ENCODE measurements at regions of chr1 and their contacts with region 1.

Region 1: GRCh38 chr1:234722904-234723720 is 113.1 kb upstream of the IRF2BP2 start:
- DNase-seq: peak; percentile 67
- H3K4me3 ChIP-seq: peak overlapping the region; percentile 41
- H3K27ac ChIP-seq: peak overlapping the region; percentile 99
- H3K4me1 ChIP-seq: peaks cover 96% of the 10 kb centered on the region
- H3K27me3 ChIP-seq: no peaks in the 10 kb centered on the region
- CTCF ChIP-seq: no peak

Region 2: GRCh38 chr1:234610348-234611152 is 112.6 kb before region 1 on chr1:
- intact Hi-C with region 1: loop called (anchors 2 kb)
- DNase-seq: peak; percentile 96
- H3K4me3 ChIP-seq: peak overlapping the region; percentile 74
- H3K27ac ChIP-seq: peak overlapping the region; percentile 100
- H3K4me1 ChIP-seq: peaks cover 74% of the 10 kb centered on the region
- H3K27me3 ChIP-seq: no peaks in the 10 kb centered on the region
- CTCF ChIP-seq: no peak

Region 3: GRCh38 chr1:234656856-234657654 is 66.1 kb before region 1 on chr1:
- intact Hi-C with region 1: no loop called
- DNase-seq: no peak
- H3K4me3 ChIP-seq: no peak overlapping the region
- H3K27ac ChIP-seq: peak overlapping the region; percentile 12
- H3K4me1 ChIP-seq: peaks cover 14% of the 10 kb centered on the region
- H3K27me3 ChIP-seq: no peaks in the 10 kb centered on the region
- CTCF ChIP-seq: no peak

Region 4: GRCh38 chr1:234842726-234843641 is 119.9 kb after region 1 on chr1:
- intact Hi-C with region 1: no loop called
- DNase-seq: peak; percentile 71
- H3K4me3 ChIP-seq: no peak overlapping the region
- H3K27ac ChIP-seq: peak overlapping the region; percentile 61
- H3K4me1 ChIP-seq: peaks cover 39% of the 10 kb centered on the region
- H3K27me3 ChIP-seq: no peaks in the 10 kb centered on the region
- CTCF ChIP-seq: no peak

Region 5: DNA sequence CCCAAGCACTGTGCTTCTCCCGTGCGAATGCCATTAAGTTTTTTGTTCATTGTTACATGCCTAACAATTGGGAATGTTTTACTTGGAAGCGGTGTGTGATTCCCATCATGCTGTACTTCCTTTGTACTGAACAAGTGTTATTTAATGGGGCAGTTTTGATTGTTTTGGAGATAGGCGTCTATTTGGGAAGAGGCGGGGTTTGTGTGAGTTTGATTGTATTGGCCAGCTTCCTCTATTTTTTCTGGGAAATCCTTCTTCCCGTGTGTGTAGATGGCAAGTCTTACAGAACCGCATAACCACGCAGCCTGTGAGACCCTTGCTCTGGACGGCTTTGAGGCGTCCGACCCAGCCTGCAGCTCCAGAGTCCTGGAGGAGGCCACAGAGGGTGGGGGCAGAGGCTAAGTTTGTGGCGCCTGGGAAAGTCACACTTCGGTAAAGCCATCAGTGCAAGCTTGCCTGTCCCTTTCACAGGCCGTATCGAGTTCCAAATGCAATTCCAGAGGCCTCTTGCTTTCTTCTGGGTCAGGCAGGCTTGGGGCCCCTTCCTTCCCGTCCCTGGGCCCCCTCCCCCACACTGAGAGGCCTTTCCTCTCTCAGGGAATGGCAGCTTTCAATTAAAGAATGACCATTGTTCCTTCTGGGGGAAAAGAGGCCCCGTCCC is 195.2 kb after region 1 on chr1:
- intact Hi-C with region 1: loop called (anchors 5 kb)
- DNase-seq: peak; percentile 38
- H3K4me3 ChIP-seq: peak overlapping the region; percentile 25
- H3K27ac ChIP-seq: peak overlapping the region; percentile 97
- H3K4me1 ChIP-seq: peaks cover 89% of the 10 kb centered on the region
- H3K27me3 ChIP-seq: no peaks in the 10 kb centered on the region
- CTCF ChIP-seq: no peak

Region 6: DNA sequence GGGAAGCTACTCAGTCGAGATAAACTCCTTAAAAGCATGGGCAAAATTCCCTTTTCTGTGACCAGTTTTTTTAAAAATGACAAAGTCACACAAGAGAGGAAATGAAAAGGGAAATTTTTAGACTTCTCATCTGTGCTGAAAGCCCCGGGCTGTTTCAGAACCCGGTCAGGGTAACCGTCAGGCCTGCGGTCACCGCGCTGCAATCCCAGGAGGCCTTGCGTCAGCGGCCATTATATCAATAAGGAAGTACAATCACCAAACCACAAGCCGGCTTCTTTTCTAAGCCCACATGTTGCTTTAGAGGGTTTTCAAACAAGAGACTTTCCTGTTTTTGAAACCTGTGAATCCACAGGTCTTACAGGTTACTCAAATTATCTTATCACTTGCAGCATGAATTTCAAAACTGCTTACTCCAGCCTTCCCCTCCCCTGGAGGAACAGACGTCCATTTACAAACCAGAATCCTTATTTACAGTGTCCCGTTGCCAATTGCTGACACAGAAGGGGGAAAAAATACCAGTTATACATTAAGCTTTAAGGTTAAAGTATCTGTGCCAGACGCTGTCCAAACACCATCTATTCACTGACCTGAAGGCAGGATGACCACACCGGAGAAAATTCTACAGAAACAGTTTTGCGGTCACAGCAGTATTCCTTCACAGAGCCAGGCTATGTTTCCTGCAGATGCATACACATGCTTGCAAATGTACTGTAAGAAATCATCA is 240.2 kb after region 1 on chr1:
- intact Hi-C with region 1: loop called (anchors 10 kb)
- DNase-seq: peak; percentile 82
- H3K4me3 ChIP-seq: no peak overlapping the region
- H3K27ac ChIP-seq: peak overlapping the region; percentile 87
- H3K4me1 ChIP-seq: peaks cover 59% of the 10 kb centered on the region
- H3K27me3 ChIP-seq: no peaks in the 10 kb centered on the region
- CTCF ChIP-seq: no peak

Region 7: DNA sequence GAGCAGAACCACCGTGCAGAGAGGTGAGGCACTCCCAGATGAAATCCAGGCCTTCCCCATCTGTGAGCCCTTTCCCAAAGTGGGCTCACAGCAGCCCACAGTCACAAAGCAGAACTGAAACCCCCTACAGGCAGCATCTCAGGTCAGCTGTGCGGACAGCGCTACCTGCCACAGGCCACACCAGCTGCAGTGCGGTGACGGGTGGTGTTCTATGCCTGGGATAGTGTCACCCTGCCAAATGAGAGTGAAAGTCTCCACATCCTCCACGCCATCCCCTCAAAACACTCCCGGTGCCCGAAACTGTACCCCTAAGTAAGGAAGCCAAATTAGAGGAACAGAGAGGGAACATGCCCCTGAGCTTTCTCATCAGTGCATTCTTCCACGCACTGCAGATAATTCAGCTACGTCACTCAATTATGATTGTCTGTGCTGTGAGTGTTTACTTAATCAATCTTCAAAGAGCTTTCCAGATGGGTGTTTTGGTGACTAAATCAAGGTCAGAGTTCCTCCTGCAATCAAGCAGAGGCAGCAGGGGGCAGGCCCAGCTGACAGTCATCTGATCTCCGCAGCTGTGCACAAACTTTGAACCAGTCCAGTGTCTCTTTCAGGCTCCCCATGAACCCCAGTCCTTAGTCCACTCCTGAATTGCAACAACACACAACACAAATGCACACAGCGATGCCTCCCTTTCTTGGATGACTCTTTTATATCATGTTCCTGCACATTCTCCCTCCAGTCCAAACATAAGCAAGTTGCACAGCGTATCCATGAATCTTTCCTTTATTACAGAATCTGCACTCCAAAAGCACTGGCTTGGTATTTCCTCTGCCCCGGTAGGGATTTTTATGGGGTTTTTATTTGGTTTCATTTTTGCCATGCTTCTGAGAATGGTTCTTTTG is 255.5 kb after region 1 on chr1:
- intact Hi-C with region 1: no loop called
- DNase-seq: peak; percentile 53
- H3K4me3 ChIP-seq: peak overlapping the region; percentile 26
- H3K27ac ChIP-seq: peak overlapping the region; percentile 89
- H3K4me1 ChIP-seq: peaks cover 61% of the 10 kb centered on the region
- H3K27me3 ChIP-seq: no peaks in the 10 kb centered on the region
- CTCF ChIP-seq: peak; percentile 30

Region 8: DNA sequence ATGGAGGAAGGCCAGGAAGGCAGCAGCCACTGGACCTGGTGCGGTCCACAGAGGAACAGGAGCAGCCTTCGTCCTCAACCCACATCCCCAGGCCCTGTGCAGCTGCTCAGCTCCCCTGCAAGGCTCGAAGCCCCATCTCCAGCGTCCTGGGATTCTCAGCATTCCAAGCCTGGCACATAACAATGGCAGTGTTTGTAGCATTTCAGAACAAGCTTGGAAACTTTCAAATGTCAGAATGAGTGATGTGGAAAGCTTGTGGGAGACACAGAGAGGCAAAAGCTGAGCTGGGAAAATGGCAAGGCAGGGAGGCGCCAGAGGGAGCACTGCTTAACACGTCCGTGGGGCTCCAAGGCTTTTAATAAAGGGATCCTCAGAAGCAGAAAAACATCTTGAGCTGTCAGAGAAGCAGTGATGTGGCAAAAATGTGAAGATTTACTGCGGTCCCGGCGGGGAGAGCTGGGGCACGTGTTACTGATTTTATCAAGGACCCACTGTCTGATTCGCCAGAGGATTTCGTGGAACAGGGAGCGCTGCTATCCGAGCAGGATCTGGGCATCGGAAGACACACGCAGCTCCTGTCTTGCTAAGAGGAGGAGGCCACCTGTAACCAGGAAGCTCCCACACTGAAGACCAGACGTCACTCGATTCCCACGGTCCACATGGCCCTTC is 367.4 kb after region 1 on chr1:
- intact Hi-C with region 1: no loop called
- DNase-seq: no peak
- H3K4me3 ChIP-seq: no peak overlapping the region
- H3K27ac ChIP-seq: no peak overlapping the region
- H3K4me1 ChIP-seq: peaks cover 15% of the 10 kb centered on the region
- H3K27me3 ChIP-seq: no peaks in the 10 kb centered on the region
- CTCF ChIP-seq: no peak

Measured in left ventricle myocardium inferior (tissue), 1 donor.